Activated CD4-positive, alpha-beta T cell treated with anti-CD3 and anti-CD28 coated beads for 36 hours (primary cell): ENCODE measurements at regions of chr7 and their contacts with region 1.

Region 1: GRCh38 chr7:100586266-100587025 is at the start of gene FBXO24:
- DNase-seq: peak; percentile 100
- ATAC-seq: peak; percentile 86
- H3K4me3 Mint-ChIP-seq: peak within 1 kb of the TSS; percentile 78
- H3K27ac Mint-ChIP-seq: peak within 1 kb of the TSS; percentile 82
- H3K4me1 Mint-ChIP-seq: peaks cover 26% of the 10 kb centered on the region
- H3K27me3 Mint-ChIP-seq: peaks cover 4% of the 10 kb centered on the region
- total RNA-seq, gene FBXO24: 1.4 to 2.1 TPM

Region 2: GRCh38 chr7:100148559-100149350 is 437.7 kb before region 1 on chr7 and contains the start of gene LAMTOR4:
- CTCF ChIA-PET with region 1: no interaction called
- POLR2A ChIA-PET with region 1: interaction called, 3 read pairs
- intact Hi-C with region 1: loop called in 1 of 2 experiments (anchors 1 kb)
- DNase-seq: peak; percentile 99
- ATAC-seq: peak; percentile 98
- H3K4me3 Mint-ChIP-seq: peak within 1 kb of the TSS; percentile 94
- H3K27ac Mint-ChIP-seq: peak within 1 kb of the TSS; percentile 97
- H3K4me1 Mint-ChIP-seq: peaks cover 29% of the 10 kb centered on the region
- H3K27me3 Mint-ChIP-seq: no peaks in the 10 kb centered on the region
- total RNA-seq, gene LAMTOR4: 69.6 to 120 TPM

Region 3: DNA sequence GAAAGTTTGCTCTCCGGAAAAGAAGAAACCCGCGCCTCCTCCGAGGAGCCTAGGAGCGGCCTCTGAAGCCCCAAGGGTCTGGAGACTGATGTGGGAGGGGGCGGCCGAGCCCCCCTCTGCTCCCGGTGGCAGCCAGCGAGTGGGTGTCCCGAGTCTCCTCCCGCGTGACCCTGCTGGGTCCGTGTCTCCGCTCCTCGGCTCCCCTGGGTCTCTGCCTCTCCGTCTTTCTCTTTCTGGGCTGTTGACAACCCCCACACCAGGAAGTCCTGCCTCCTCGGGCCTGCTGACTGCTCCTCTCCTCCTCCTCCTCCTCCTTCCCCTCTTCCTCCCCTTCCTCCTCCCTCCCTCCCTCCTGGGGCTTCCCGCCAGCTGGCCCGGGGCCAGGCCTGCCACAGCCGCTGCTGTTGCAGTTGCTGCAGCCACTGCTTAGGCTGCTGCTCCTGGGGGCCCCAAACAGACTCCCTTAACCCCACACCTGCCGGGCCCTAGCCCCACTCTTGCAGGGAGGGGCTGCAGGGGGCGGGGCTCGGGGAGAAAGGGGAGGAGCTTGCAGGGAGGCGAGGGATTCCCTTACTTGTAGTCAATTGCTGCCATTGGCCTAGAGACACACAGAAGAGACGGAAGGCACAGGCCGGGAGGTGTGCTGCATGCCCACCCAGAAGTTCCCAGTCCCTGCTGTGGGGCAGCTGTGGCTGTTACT is 107.3 kb before region 1 on chr7 and contains the start of gene TSC22D4:
- CTCF ChIA-PET with region 1: interaction called, 4 read pairs
- POLR2A ChIA-PET with region 1: no interaction called
- intact Hi-C with region 1: loop called (anchors 1 kb)
- DNase-seq: peak; percentile 96
- ATAC-seq: peak; percentile 79
- H3K4me3 Mint-ChIP-seq: peak within 1 kb of the TSS; percentile 92
- H3K27ac Mint-ChIP-seq: peak within 1 kb of the TSS; percentile 94
- H3K4me1 Mint-ChIP-seq: peaks cover 41% of the 10 kb centered on the region
- H3K27me3 Mint-ChIP-seq: no peaks in the 10 kb centered on the region
- total RNA-seq, gene TSC22D4: 78.5 to 85.7 TPM

Region 4: GRCh38 chr7:100568896-100569844 is 17.3 kb before region 1 on chr7:
- CTCF ChIA-PET with region 1: interaction called, 7 read pairs
- POLR2A ChIA-PET with region 1: interaction called, 8 read pairs
- intact Hi-C with region 1: loop called in 1 of 2 experiments (anchors 2 kb)
- DNase-seq: peak; percentile 73
- ATAC-seq: peak; percentile 45
- H3K4me3 Mint-ChIP-seq: peak overlapping the region; percentile 2
- H3K27ac Mint-ChIP-seq: no peak overlapping the region
- H3K4me1 Mint-ChIP-seq: peaks cover 36% of the 10 kb centered on the region
- H3K27me3 Mint-ChIP-seq: no peaks in the 10 kb centered on the region

Region 5: DNA sequence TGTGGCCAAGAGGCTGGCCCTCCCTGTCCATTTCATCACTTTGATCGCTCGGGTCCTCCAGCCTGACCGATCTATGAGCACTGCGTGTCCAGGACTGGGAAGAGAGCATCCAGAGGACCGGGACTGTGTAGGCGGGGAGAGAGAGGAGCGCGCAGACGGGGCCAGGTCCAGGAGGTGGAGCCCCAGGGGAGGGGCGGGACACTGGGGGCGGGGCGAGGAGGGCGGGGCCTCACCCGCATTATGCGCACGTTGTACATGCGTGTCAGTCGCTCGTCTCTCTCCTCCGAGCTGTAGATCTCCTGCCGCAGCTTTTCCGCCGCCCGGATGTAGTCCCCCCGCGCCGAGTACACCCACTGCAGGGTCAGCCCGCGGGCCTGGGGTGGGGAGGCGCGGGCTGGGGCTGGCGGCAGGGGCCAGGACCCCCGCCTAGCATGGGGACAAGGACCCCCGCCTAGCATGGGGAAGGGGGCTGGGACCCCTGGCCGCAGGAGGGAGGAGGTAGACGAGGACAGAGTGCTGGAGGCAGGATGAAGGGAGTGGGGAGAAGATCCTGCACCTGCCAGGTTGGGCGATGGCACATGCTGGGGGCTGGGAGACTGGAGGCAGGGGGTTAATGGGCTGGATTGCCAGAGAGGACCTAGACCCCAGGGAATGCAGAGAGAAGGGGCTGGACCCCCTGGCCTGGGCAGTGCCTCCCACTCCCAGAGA is 40.2 kb after region 1 on chr7:
- CTCF ChIA-PET with region 1: interaction called, 4 read pairs
- POLR2A ChIA-PET with region 1: interaction called, 8 read pairs
- intact Hi-C with region 1: loop called (anchors 1 to 5 kb)
- DNase-seq: peak; percentile 96
- ATAC-seq: peak; percentile 99
- H3K4me3 Mint-ChIP-seq: peak overlapping the region; percentile 71
- H3K27ac Mint-ChIP-seq: peak overlapping the region; percentile 47
- H3K4me1 Mint-ChIP-seq: peaks cover 13% of the 10 kb centered on the region
- H3K27me3 Mint-ChIP-seq: no peaks in the 10 kb centered on the region

Region 6: DNA sequence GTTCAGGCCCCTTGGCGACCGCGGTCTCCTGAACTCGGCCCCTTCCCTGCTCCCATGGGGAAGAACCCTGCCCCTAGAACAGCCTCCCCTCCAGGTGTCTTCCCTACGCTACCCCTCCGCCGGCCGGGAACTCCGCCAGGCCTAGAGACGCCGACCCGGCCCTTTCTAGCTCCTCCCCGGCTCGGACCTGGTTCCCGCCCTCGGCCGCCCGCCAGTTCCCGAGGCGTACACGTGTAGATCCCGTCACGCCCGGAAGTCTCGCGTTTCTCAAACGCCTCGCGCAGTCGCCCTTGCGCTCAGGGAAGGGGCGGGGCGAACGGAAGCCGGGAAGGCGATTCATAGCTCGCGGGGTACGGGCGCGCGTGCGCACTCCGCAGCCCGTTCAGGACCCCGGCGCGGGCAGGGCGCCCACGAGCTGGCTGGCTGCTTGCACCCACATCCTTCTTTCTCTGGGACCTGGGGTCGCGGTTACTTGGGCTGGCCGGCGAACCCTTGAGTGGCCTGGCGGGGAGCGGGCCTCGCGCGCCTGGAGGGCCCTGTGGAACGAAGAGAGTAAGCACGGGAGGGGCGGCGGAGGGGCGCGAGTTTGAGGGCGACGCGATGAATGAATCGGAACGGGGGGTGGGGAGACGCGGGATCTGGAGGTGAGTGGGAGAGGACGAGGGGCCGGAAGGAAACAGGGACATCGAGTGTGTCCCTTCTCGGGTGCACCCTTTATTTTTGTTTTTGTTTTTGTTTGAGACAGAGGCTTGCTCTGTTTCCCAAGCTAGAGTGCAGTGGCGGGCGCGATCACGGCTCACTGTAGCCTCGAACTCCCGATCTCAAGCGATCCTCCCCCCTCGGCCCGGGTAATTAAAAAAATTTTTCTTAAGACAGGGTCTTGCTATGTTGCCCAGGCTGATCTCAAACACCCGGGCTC is 119.6 kb after region 1 on chr7 and contains the start of gene POP7:
- CTCF ChIA-PET with region 1: interaction called, 14 read pairs
- POLR2A ChIA-PET with region 1: interaction called, 13 read pairs
- intact Hi-C with region 1: loop called (anchors 1 kb)
- DNase-seq: peak; percentile 99
- ATAC-seq: peak; percentile 96
- H3K4me3 Mint-ChIP-seq: peak within 1 kb of the TSS; percentile 96
- H3K27ac Mint-ChIP-seq: peak within 1 kb of the TSS; percentile 96
- H3K4me1 Mint-ChIP-seq: peaks cover 12% of the 10 kb centered on the region
- H3K27me3 Mint-ChIP-seq: no peaks in the 10 kb centered on the region
- total RNA-seq, gene POP7: 46.1 to 59.4 TPM